Gastrocnemius medialis (tissue), 4 donors: ENCODE measurements at regions of chr2 and their contacts with region 1.

Region 1: DNA sequence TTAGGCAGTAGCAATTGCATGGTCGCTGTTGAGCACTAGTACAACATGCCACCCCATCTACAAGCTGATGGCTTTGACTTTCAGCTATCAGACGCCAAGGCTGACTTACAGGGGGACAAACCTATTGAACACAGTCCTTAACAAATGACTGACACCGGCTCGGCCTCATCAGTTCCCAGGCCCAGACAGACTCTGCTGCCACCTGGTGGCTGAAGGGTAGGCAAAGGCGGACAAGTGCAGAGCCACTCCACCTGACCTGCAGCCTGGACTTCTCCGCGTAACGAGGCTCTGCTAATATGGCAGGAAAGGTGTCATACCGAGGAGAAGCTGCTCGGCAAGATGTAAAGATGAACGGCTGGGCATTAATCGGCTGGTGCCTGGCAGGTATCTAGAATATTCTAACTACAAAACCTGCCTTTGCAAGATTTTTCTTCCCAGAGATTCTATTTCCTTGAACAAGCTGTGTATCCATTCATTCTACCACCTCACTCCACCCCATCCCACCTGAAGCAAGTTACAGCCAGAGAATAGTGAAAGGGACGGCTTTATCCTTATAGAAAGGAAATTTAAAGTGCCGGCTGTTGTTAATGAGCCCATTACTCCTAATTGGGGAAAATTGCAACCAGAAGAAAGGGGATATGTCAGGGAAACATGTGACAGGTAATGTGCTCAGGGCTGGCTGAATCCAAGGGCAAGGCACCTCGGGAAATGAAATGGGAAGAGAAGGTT is 67.4 kb downstream of the STEAP3 start:
- DNase-seq: peak; percentile 52 to 67
- ATAC-seq: peak; percentile 29 to 40
- H3K4me3 ChIP-seq: no peak overlapping the region
- H3K27ac ChIP-seq: no peak overlapping the region
- H3K4me1 ChIP-seq: peaks cover 12 to 25% of the 10 kb centered on the region in 2 donors
- H3K27me3 ChIP-seq: no peaks in the 10 kb centered on the region
- CTCF ChIP-seq: peak; percentile 46 to 90 (median 84)
- POLR2A ChIP-seq: no peak

Region 2: DNA sequence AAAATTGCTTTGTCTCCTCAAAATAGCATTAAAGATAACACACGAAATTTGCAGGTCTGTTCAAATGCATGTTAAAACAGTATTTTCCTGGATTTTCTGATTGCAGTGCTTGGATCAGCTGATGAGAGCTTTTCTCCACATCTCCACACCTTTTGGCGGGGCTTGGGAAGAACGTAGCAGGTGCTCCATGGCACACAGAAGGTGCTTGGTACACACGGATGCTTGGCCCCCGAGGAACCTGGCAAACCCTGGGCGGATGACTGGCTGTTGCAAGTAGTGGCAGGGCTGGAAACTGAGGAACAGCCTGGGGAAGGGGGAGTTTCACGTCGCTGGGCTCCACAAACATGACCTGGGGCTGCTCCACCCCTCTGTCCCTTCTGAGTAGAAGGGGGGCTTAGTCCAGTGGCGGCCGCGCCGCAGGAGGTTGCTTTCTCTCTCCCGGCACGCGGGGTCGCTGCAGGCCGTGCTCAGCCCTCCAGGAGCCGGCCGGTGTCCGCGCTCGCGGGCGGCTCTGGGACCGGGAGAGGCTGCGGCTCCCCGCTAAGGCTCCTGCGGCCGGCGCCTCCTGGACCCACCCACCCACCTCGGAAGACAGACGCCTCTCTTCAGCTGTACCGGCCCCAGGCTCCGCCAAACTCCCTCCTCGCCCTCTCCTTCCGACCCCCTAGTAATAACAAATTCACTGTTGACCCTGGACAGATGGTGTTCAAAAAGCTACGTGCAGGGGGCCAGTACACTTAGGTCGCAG is 279.7 kb before region 1 on chr2:
- in situ Hi-C with region 1: no loop called
- intact Hi-C with region 1: loop called (anchors 2 kb)
- DNase-seq: no peak
- ATAC-seq: peak; percentile 60 to 65
- H3K4me3 ChIP-seq: peak overlapping the region in 3 of 4 donors; percentile 17 to 21 (median 20)
- H3K27ac ChIP-seq: no peak overlapping the region
- H3K4me1 ChIP-seq: peaks cover 0 to 3% of the 10 kb centered on the region in 2 donors
- H3K27me3 ChIP-seq: peaks cover 0 to 8% (median 3%) of the 10 kb centered on the region in 3 donors
- CTCF ChIP-seq: peak; percentile 24 to 70 (median 58)
- POLR2A ChIP-seq: no peak

Region 3: GRCh38 chr2:119218478-119219064 is 72.5 kb before region 1 on chr2:
- in situ Hi-C with region 1: no loop called
- intact Hi-C with region 1: loop called (anchors 2 kb)
- DNase-seq: peak; percentile 69 to 76
- ATAC-seq: peak; percentile 77
- H3K4me3 ChIP-seq: no peak overlapping the region
- H3K27ac ChIP-seq: peak overlapping the region; percentile 10 to 80 (median 71)
- H3K4me1 ChIP-seq: peaks cover 7 to 16% of the 10 kb centered on the region in 2 donors
- H3K27me3 ChIP-seq: no peaks in the 10 kb centered on the region
- CTCF ChIP-seq: peak; percentile 54 to 78 (median 68)
- POLR2A ChIP-seq: no peak

Region 4: GRCh38 chr2:119487434-119488244 is 196.6 kb after region 1 on chr2:
- in situ Hi-C with region 1: no loop called
- intact Hi-C with region 1: loop called (anchors 10 kb)
- DNase-seq: no peak
- ATAC-seq: no peak
- H3K4me3 ChIP-seq: no peak overlapping the region
- H3K27ac ChIP-seq: peak overlapping the region in 3 of 4 donors; percentile 72 to 88 (median 82)
- H3K4me1 ChIP-seq: peaks cover 44 to 77% of the 10 kb centered on the region in 2 donors
- H3K27me3 ChIP-seq: no peaks in the 10 kb centered on the region
- CTCF ChIP-seq: no peak
- POLR2A ChIP-seq: no peak